ENCODE measurements at regions of chr4 and their contacts with region 1.

Region 1: GRCh38 chr4:79576429-79576753 is 168.4 kb upstream of the GK2 start:
- DNase-seq: peak; percentile 60
- ATAC-seq: peak; percentile 90
- H3K4me3 ChIP-seq: no peak overlapping the region
- H3K27ac ChIP-seq: no peak overlapping the region
- H3K4me1 ChIP-seq: no peaks in the 10 kb centered on the region
- H3K27me3 ChIP-seq: 0 out of 2 replicates have a peak, but pooled peaks cover 2% of the 10 kb centered on the region
- CTCF ChIP-seq: peak; percentile 66

Region 2: GRCh38 chr4:79042079-79042674 is 534.2 kb before region 1 on chr4:
- CTCF ChIA-PET with region 1: no interaction called
- POLR2A ChIA-PET with region 1: no interaction called
- intact Hi-C with region 1: loop called (anchors 2 kb)
- DNase-seq: peak; percentile 47
- ATAC-seq: peak; percentile 35; the same call in 1 of the 2 replicates
- H3K4me3 ChIP-seq: no peak overlapping the region
- H3K27ac ChIP-seq: no peak overlapping the region
- H3K4me1 ChIP-seq: no peaks in the 10 kb centered on the region
- H3K27me3 ChIP-seq: no peaks in the 10 kb centered on the region
- CTCF ChIP-seq: peak; percentile 66

Region 3: DNA sequence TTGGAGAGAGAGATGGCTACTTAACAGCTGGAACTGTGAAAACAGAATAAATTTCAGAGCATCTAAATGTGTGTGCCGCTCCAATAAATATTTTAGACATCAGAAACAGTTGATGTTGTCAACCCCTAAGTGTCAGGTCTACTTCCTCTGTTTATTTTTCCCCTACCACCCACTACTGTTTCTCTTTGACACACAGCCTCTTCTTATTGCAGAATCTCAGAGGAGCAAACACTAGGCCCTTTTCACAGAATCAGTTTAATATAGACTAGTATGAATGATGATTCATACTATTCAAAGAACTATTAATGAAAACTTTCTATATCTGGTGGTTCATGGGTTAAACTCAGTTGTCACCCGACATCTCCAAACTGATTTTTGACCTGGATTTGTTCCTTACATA is 284.4 kb before region 1 on chr4:
- CTCF ChIA-PET with region 1: no interaction called
- POLR2A ChIA-PET with region 1: no interaction called
- intact Hi-C with region 1: no loop called
- DNase-seq: no peak
- ATAC-seq: no peak
- H3K4me3 ChIP-seq: no peak overlapping the region
- H3K27ac ChIP-seq: no peak overlapping the region
- H3K4me1 ChIP-seq: no peaks in the 10 kb centered on the region
- H3K27me3 ChIP-seq: peaks cover 12% of the 10 kb centered on the region; the same call in 1 of the 2 replicates
- CTCF ChIP-seq: no peak

Region 4: GRCh38 chr4:79893456-79893855 is 317.1 kb after region 1 on chr4:
- CTCF ChIA-PET with region 1: no interaction called
- POLR2A ChIA-PET with region 1: no interaction called
- intact Hi-C with region 1: loop called (anchors 5 kb)
- DNase-seq: no peak
- ATAC-seq: no peak
- H3K4me3 ChIP-seq: no peak overlapping the region
- H3K27ac ChIP-seq: no peak overlapping the region
- H3K4me1 ChIP-seq: no peaks in the 10 kb centered on the region
- H3K27me3 ChIP-seq: no peaks in the 10 kb centered on the region
- CTCF ChIP-seq: no peak